ENCODE measurements at regions of chr5 and their contacts with region 1.

Region 1: GRCh38 chr5:146816775-146817387 is 61.7 kb downstream of the PPP2R2B start:
- DNase-seq: no peak
- ATAC-seq: no peak
- H3K4me3 ChIP-seq: no peak overlapping the region
- H3K27ac ChIP-seq: no peak overlapping the region
- H3K4me1 ChIP-seq: no peaks in the 10 kb centered on the region
- H3K27me3 ChIP-seq: no peaks in the 10 kb centered on the region
- CTCF ChIP-seq: no peak

Region 2: GRCh38 chr5:146049014-146049703 is 767.7 kb before region 1 on chr5:
- CTCF ChIA-PET with region 1: no interaction called
- POLR2A ChIA-PET with region 1: no interaction called
- intact Hi-C with region 1: no loop called
- DNase-seq: peak; percentile 92
- ATAC-seq: peak; percentile 75
- H3K4me3 ChIP-seq: no peak overlapping the region
- H3K27ac ChIP-seq: no peak overlapping the region
- H3K4me1 ChIP-seq: peaks cover 20% of the 10 kb centered on the region; the same call in 1 of the 2 replicates
- H3K27me3 ChIP-seq: no peaks in the 10 kb centered on the region
- CTCF ChIP-seq: peak; percentile 96

Region 3: GRCh38 chr5:146622391-146622790 is 194.5 kb before region 1 on chr5:
- CTCF ChIA-PET with region 1: no interaction called
- POLR2A ChIA-PET with region 1: no interaction called
- intact Hi-C with region 1: no loop called
- DNase-seq: peak; percentile 47
- ATAC-seq: peak; percentile 65
- H3K4me3 ChIP-seq: no peak overlapping the region
- H3K27ac ChIP-seq: no peak overlapping the region
- H3K4me1 ChIP-seq: no peaks in the 10 kb centered on the region
- H3K27me3 ChIP-seq: peaks cover 60% of the 10 kb centered on the region
- CTCF ChIP-seq: peak; percentile 83

Region 4: DNA sequence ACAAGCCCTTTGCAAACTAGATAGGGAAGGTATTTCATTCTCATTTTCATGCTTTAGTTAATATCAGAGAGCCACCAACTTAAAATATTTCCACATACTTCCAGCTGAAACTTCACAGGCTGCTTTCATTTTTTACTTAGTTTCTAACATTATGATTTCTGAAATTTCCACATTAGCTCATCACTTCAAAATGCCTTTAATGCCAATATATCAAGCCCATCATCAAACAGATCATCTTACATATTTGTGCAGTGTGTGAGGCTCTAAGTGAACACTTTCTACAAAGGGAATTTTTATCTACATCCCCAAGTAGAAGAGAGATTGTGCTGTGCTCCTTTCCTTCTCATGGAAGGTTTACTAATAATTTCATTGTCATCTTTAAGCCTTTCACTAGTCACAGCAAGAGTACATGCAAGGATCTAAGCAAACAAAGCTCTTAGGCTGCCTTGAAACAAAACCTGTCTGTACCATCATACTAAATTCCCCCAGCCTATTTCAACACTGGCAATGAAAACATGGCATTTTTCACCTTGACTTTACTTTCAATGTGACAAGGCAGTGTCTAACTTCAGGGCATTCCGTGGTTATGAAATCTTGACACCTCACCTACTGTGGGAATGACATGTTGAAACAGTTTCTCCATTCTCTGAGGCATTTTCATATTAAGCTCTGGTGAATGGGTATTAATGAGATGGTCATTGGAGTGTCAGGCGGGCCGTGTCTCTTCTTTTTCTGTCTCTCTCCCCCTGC is 16.3 kb after region 1 on chr5:
- CTCF ChIA-PET with region 1: no interaction called
- POLR2A ChIA-PET with region 1: no interaction called
- intact Hi-C with region 1: loop called (anchors 1 kb)
- DNase-seq: no peak
- ATAC-seq: no peak
- H3K4me3 ChIP-seq: no peak overlapping the region
- H3K27ac ChIP-seq: no peak overlapping the region
- H3K4me1 ChIP-seq: no peaks in the 10 kb centered on the region
- H3K27me3 ChIP-seq: no peaks in the 10 kb centered on the region
- CTCF ChIP-seq: no peak

Measured in PC-3 (cell line).